ENCODE measurements at regions of chr14 and their contacts with region 1.

Region 1: GRCh38 chr14:20743256-20743959 is 2.3 kb upstream of the EDDM3A start:
- DNase-seq: no peak
- ATAC-seq: no peak
- H3K4me3 ChIP-seq: no peak overlapping the region
- H3K4me3 Mint-ChIP-seq: no peak overlapping the region
- H3K27ac ChIP-seq: no peak overlapping the region
- H3K27ac Mint-ChIP-seq: no peak overlapping the region
- H3K4me1 ChIP-seq: peaks cover 0 to 8% of the 10 kb centered on the region in 2 donors
- H3K4me1 Mint-ChIP-seq: peaks cover 9% of the 10 kb centered on the region
- H3K27me3 ChIP-seq: no peaks in the 10 kb centered on the region
- H3K27me3 Mint-ChIP-seq: peaks cover 17% of the 10 kb centered on the region
- CTCF ChIP-seq: no peak

Region 2: GRCh38 chr14:20707622-20708021 is 35.8 kb before region 1 on chr14:
- CTCF ChIA-PET with region 1: interaction called, 3 read pairs
- POLR2A ChIA-PET with region 1: no interaction called
- intact Hi-C with region 1: loop called (anchors 5 kb)
- DNase-seq: no peak
- ATAC-seq: no peak
- H3K4me3 ChIP-seq: no peak overlapping the region
- H3K4me3 Mint-ChIP-seq: no peak overlapping the region
- H3K27ac ChIP-seq: no peak overlapping the region
- H3K27ac Mint-ChIP-seq: no peak overlapping the region
- H3K4me1 ChIP-seq: no peaks in the 10 kb centered on the region
- H3K4me1 Mint-ChIP-seq: peaks cover 3% of the 10 kb centered on the region
- H3K27me3 ChIP-seq: no peaks in the 10 kb centered on the region
- H3K27me3 Mint-ChIP-seq: no peaks in the 10 kb centered on the region
- CTCF ChIP-seq: no peak

Region 3: GRCh38 chr14:20719777-20720176 is 23.6 kb before region 1 on chr14:
- CTCF ChIA-PET with region 1: no interaction called
- POLR2A ChIA-PET with region 1: no interaction called
- intact Hi-C with region 1: no loop called
- DNase-seq: no peak
- ATAC-seq: no peak
- H3K4me3 ChIP-seq: no peak overlapping the region
- H3K4me3 Mint-ChIP-seq: peak overlapping the region; percentile 44
- H3K27ac ChIP-seq: peak overlapping the region; percentile 33 to 49
- H3K27ac Mint-ChIP-seq: peak overlapping the region; percentile 84
- H3K4me1 ChIP-seq: peaks cover 22 to 60% of the 10 kb centered on the region in 2 donors
- H3K4me1 Mint-ChIP-seq: peaks cover 64% of the 10 kb centered on the region
- H3K27me3 ChIP-seq: peaks cover 0 to 3% (median 0%) of the 10 kb centered on the region in 4 experiments
- H3K27me3 Mint-ChIP-seq: peaks cover 16% of the 10 kb centered on the region
- CTCF ChIP-seq: no peak

Region 4: DNA sequence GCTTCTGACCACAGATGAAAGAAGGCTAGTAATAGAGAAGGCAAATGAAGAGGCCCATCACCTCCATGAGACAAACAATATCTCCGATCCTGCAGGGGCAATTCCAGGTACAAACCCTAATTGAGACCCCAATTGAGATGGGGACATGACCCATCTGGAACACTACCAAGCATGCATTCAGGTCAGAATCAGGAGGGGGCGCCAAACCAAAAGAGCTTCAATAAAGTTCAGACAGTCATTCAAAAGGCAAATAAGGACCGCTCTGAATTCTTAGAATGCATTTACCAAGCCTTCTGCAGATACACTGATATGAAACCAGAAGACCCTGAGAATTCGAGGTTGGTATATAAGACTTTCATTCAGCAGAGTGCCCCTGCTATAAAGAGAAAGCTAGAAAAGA is 14.6 kb after region 1 on chr14:
- CTCF ChIA-PET with region 1: interaction called, 10 read pairs
- POLR2A ChIA-PET with region 1: interaction called, 3 read pairs
- intact Hi-C with region 1: no loop called
- DNase-seq: peak; percentile 60
- ATAC-seq: peak; percentile 28
- H3K4me3 ChIP-seq: no peak overlapping the region
- H3K4me3 Mint-ChIP-seq: no peak overlapping the region
- H3K27ac ChIP-seq: no peak overlapping the region
- H3K27ac Mint-ChIP-seq: no peak overlapping the region
- H3K4me1 ChIP-seq: no peaks in the 10 kb centered on the region
- H3K4me1 Mint-ChIP-seq: peaks cover 4% of the 10 kb centered on the region
- H3K27me3 ChIP-seq: no peaks in the 10 kb centered on the region
- H3K27me3 Mint-ChIP-seq: peaks cover 4% of the 10 kb centered on the region
- CTCF ChIP-seq: peak; percentile 46

Region 5: DNA sequence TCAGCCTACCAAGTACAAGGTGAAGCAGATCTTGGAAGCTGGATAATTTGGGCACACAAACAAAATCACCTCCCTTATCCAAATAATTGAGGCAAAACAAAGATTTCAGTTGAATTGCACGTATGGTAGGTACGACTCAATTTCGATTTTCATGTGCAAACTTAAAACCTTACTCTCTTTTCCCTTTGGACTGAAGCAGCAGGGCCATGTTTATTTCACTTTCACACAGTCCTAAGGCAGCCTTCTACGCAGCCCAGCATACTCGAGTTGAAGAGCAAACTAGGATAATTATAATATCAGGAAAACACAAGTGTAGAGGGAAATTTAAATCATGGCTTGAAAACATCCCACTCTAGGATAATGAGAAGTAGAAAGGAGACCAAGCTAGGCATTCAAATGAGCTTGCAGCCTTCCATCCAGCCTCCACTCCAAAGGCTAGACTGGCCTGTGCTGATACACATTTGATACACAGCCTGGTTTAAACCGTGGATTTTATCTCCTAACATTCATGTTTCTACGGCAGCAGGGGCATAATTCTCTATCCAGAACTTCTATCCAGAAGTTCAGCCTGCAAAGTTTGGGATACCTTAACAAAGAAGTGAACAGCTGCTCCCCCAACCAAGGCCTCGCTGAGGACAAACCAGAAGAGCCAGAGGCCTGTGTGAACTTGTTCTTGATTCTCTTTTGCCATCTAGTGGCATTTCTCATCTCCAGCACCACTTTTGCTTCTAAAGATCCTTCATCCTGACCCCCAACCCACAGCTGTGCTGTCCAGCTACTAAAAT is 296.4 kb after region 1 on chr14:
- CTCF ChIA-PET with region 1: no interaction called
- POLR2A ChIA-PET with region 1: no interaction called
- intact Hi-C with region 1: no loop called
- DNase-seq: peak; percentile 63
- ATAC-seq: no peak
- H3K4me3 ChIP-seq: no peak overlapping the region
- H3K4me3 Mint-ChIP-seq: no peak overlapping the region
- H3K27ac ChIP-seq: no peak overlapping the region
- H3K27ac Mint-ChIP-seq: no peak overlapping the region
- H3K4me1 ChIP-seq: no peaks in the 10 kb centered on the region
- H3K4me1 Mint-ChIP-seq: no peaks in the 10 kb centered on the region
- H3K27me3 ChIP-seq: no peaks in the 10 kb centered on the region
- H3K27me3 Mint-ChIP-seq: peaks cover 47% of the 10 kb centered on the region
- CTCF ChIP-seq: peak; percentile 37

Measured in B cell (primary cell).